GM23248 (cell line): ENCODE measurements at regions of chr1 and their contacts with region 1.

Region 1: DNA sequence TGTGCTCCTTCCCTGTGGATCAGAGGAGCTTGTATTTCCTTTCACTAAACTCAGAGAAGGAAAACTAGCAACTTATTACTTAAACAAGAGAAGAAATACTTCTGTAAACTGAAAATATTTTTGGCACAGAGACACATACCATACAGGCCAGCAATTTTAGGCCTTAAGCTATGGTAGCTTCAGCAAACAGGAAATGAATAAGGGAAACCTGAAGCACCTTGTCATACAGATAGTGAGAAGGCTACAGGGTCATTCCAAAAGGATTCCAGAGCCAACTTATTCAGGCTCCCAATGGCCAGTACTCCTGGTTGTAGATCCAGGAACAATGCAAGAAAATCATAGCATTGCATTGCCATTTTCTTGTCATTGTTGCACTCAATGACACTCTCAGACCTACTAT is 9.1 kb upstream of the KYAT3 start:
- DNase-seq: peak; percentile 34
- H3K4me3 ChIP-seq: no peak overlapping the region
- H3K27ac ChIP-seq: 0 out of 2 replicates have a peak overlapping the region, but pooled peaks have one; percentile 3
- H3K4me1 ChIP-seq: peaks cover 13% of the 10 kb centered on the region
- H3K27me3 ChIP-seq: no peaks in the 10 kb centered on the region

Region 2: DNA sequence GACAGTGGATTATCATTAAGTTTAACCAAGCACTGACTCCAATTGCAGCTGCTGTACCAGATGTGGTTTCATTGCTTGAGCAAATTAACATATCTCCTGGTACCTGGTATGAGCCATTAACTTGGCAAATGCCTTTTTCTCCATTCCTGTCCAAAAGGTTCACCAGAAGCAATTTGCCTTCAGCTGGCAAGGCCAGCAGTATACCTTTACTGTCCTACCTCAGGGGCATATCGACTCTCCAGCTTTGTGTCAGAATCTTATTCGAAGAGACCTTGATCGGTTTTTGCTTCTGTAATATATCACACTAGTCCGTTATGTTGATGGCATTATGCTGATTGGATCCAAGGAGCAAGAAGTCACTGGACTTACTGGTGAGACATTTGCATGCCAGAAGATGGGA is 100.6 kb before region 1 on chr1:
- in situ Hi-C with region 1: no loop called
- DNase-seq: no peak
- H3K4me3 ChIP-seq: no peak overlapping the region
- H3K27ac ChIP-seq: no peak overlapping the region
- H3K4me1 ChIP-seq: no peaks in the 10 kb centered on the region
- H3K27me3 ChIP-seq: no peaks in the 10 kb centered on the region

Region 3: DNA sequence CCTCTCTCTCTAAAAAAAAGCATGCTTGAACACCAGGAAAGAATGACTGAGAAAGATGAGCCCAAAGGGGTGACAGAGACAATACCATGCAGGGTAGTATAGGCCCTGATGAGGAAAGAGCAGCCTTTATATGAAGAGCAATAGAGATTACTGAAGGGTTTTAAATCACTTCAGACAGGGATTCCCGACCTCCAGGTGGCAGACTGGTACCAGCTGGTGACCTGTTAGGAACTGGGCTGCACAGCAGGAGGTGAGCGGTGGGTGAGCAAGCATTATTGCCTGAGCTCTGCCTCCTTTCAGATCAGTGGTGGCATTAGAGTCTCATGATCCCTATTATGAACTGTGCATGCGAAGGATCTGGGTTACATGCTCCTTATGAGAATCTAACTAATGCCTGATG is 79.3 kb before region 1 on chr1:
- in situ Hi-C with region 1: no loop called
- DNase-seq: no peak
- H3K4me3 ChIP-seq: no peak overlapping the region
- H3K27ac ChIP-seq: no peak overlapping the region
- H3K4me1 ChIP-seq: no peaks in the 10 kb centered on the region
- H3K27me3 ChIP-seq: no peaks in the 10 kb centered on the region

Region 4: GRCh38 chr1:89363196-89363595 is 361.7 kb after region 1 on chr1:
- in situ Hi-C with region 1: loop called (anchors 5 kb)
- DNase-seq: peak; percentile 15
- H3K4me3 ChIP-seq: no peak overlapping the region
- H3K27ac ChIP-seq: no peak overlapping the region
- H3K4me1 ChIP-seq: no peaks in the 10 kb centered on the region
- H3K27me3 ChIP-seq: no peaks in the 10 kb centered on the region

Region 5: DNA sequence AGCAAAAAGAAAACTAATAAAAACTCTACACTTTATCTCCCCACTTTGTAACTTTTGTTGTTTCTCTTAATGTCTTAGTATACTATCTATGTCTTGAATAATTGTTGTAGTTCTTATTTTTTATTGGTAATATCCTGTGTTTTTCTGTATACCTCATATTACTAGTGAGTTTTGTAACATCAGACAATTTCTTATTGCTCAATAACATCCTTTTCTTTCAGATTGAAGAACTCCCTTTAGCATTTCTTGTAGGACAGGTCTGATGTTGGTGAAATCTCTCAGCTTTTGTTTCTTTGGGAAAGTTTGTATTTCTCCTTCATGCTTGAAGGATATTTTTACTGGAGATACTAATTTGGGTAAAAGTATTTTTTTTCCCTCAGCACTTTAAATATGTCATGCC is 443.3 kb after region 1 on chr1:
- in situ Hi-C with region 1: loop called (anchors 10 kb)
- DNase-seq: no peak
- H3K4me3 ChIP-seq: no peak overlapping the region
- H3K27ac ChIP-seq: no peak overlapping the region
- H3K4me1 ChIP-seq: no peaks in the 10 kb centered on the region
- H3K27me3 ChIP-seq: 0 out of 2 replicates have a peak, but pooled peaks cover 3% of the 10 kb centered on the region